Activated B cell treated with CpG ODN at 0.5 μM for 24 hours (primary cell): ENCODE measurements at regions of chr5 and their contacts with region 1.

Region 1: GRCh38 chr5:149667084-149667828 is 62.9 kb upstream of the PPARGC1B start:
- DNase-seq: no peak
- ATAC-seq: peak; percentile 50
- H3K4me3 Mint-ChIP-seq: no peak overlapping the region
- H3K27ac Mint-ChIP-seq: no peak overlapping the region
- H3K4me1 Mint-ChIP-seq: peaks cover 5% of the 10 kb centered on the region
- H3K27me3 Mint-ChIP-seq: no peaks in the 10 kb centered on the region
- CTCF ChIP-seq: peak; percentile 94

Region 2: DNA sequence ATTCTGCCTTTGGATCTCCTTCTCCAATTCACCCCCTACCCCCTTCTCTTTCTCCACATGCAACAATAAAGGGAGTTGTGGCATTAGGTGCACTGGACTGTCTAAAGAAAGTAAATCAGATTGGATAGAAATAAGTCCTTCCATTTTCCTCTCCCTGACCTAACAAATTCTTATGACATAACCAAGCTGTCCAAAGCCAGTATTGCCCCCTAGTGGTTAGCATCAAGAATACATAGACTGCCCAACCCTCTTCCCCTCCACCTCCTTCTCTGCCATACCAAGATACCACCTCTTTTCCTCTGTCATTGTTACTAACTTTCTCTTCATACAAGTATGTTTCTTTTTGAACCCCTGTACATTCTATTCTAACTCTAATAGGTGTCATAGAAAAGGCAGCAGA is 108.5 kb after region 1 on chr5:
- CTCF ChIA-PET with region 1: interaction called, 15 read pairs
- POLR2A ChIA-PET with region 1: no interaction called
- intact Hi-C with region 1: loop called (anchors 1 kb)
- DNase-seq: no peak
- ATAC-seq: peak; percentile 29
- H3K4me3 Mint-ChIP-seq: no peak overlapping the region
- H3K27ac Mint-ChIP-seq: no peak overlapping the region
- H3K4me1 Mint-ChIP-seq: peaks cover 52% of the 10 kb centered on the region
- H3K27me3 Mint-ChIP-seq: no peaks in the 10 kb centered on the region
- CTCF ChIP-seq: no peak